ENCODE measurements at regions of chr15 and their contacts with region 1.

Region 1: DNA sequence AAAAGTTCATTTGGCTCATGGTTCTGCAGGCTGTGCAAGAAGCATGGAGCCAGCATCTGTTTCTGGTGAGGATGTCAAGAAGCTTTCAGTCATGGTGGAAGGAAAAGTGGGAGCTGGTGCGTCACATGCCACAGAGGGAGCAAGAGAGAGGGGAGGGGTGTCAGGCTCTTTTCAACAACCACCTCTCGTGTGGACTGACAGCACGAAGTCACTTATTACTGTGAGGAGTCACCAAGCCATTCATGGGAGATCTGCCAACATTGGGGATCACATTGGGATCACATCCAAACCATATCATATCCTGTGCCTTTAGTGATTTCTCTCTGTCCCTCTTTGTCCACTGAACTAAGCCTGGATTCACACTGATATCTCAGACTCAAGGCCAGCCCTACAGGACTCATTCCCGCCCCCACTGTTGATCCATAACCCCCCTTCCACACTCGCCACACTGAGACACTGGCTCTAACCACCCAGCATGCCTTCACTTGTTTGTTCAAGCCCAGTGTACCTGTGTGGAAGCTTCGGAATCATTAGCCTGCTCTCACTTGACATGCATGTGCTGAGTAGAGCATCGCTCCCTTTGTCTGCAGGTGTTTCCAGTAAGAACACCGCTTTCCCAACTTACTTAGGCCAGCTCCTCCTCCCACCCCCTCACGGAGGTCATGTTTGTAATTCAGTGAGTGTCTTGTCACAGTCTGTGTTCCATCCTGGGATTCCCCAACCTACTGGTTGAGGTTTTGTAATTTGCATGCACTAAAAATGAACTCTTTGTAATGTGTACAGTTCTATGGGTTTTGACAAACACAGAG is 132.2 kb downstream of the KLF13 start:
- DNase-seq: peak; percentile 88
- H3K4me3 ChIP-seq: peak overlapping the region; percentile 62
- H3K27ac ChIP-seq: peak overlapping the region; percentile 96
- H3K4me1 ChIP-seq: peaks cover 95% of the 10 kb centered on the region
- CTCF ChIP-seq: no peak

Region 2: DNA sequence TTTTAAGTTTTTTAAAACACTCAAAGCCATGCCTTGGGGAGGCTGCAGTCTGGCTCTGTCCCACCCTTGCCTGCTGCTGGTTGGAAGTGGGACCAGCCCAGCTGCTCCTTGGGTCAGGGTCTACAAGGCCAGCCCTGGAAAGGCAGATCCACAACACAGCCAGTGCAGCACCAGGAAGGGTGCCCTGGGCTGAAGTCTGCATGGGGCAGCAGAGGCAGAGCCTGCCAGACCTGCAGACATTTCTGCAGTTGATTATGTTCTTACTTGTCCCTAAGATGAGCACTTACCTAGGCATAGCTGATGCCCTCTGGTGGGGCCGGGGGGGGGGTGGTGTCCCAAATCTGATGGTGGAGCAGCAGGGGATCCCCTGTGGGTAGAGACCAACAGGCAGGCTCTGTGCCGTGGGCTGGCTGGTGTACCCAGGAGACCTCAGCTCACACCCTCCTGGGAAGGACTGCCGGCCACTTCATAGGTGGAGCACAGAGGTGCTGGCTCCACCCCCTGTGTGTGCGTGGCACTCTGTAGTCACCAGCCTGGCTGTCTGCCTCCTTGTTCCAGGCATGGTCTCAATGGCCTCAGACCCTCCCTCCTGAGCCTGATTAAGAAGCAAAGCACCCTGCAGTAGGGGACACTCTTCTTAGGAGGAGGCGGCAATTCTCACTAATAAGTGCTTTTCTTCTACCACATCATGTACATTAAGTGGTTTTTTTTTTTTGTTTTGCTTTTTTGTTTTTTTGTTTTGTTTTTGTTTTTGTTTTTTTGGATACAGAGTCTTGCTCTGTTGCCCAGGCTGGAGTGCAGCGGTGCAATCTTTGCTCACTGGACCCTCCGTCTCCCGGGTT is 229.6 kb before region 1 on chr15:
- CTCF ChIA-PET with region 1: no interaction called
- POLR2A ChIA-PET with region 1: interaction called, 22 read pairs
- intact Hi-C with region 1: loop called (anchors 2 kb)
- DNase-seq: peak; percentile 91
- H3K4me3 ChIP-seq: peak overlapping the region; percentile 77
- H3K27ac ChIP-seq: peak overlapping the region; percentile 99
- H3K4me1 ChIP-seq: peaks cover 94% of the 10 kb centered on the region
- CTCF ChIP-seq: no peak

Region 3: GRCh38 chr15:31440754-31441311 is 18.0 kb before region 1 on chr15:
- CTCF ChIA-PET with region 1: interaction called, 5 read pairs
- POLR2A ChIA-PET with region 1: interaction called, 14 read pairs
- intact Hi-C with region 1: loop called (anchors 2 kb)
- DNase-seq: no peak
- H3K4me3 ChIP-seq: peak overlapping the region; percentile 27
- H3K27ac ChIP-seq: no peak overlapping the region
- H3K4me1 ChIP-seq: peaks cover 97% of the 10 kb centered on the region
- CTCF ChIP-seq: no peak

Region 4: DNA sequence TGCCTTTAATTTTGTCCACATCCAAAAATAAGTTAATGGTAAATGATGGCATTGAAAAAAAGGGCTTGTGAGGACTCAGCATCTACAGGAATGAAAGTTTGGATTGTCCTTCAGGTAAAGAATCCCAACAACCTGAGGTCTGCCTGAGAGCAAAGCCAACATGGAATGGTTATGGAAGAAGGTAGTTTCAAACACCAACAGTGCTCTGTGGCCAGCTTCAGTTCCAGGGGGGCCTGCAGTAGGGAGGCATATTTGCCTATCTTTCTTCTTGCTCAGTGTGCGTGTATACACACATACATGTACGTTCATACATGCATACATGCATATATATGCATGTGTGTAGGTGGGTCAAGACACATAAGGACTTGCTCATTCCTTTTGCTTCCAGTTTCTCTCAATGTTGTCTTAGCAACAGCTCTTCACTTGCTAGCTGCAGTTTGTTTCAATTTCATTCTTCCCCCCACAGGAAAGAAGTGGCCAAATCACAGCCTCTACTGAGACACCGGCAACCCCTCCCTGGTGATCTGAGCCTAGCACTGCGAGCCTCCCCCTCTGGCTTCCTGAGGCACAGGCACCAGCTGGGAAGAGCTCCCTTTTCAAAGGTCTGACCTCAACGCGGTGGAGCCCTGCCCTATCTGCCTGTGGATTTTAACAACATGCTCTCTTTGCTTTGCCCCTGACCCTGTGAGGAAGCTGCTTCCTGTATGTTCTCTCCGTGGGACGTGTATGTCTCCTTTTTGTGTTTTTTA is 14.0 kb after region 1 on chr15:
- CTCF ChIA-PET with region 1: interaction called, 6 read pairs
- POLR2A ChIA-PET with region 1: interaction called, 22 read pairs
- intact Hi-C with region 1: no loop called
- DNase-seq: peak; percentile 39
- H3K4me3 ChIP-seq: no peak overlapping the region
- H3K27ac ChIP-seq: no peak overlapping the region
- H3K4me1 ChIP-seq: peaks cover 45% of the 10 kb centered on the region
- CTCF ChIP-seq: no peak

Region 5: DNA sequence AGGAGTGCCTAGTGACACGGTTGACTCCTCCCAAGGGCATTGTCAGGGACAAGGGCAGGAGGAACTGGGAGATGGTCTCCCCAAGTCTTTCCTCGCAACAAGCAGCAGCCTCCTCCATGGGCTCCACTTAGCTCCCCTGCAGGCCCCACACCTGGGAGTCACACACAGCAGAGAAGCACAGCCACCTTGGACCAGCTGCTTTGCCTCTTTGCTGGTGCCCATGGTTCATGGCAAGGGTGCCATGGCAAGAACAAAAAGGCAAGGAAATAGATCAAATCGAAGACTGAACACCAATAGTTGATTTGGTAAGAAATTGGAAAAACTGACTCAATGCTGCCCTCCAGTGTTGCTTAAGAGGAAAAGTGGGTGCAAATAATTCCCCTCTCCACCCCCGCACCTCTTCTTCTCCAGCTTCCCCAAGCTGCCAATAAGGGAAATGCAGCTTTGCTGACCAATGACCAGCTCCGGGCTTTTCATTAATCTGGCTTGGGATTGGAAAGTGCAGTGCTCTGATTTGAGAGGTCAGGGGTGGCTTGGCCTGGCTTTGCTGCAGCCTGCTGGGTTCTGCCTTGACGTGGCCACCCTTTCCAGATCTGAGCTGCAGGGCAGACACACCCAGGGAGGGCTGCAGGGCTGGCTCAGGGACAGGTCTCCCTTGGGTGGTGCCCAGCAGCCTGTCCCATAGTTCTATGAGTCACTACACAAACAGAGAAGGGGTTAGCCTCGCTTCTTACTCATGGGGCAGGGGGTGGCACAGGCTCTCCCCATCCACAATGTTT is 29.8 kb after region 1 on chr15:
- CTCF ChIA-PET with region 1: interaction called, 18 read pairs
- POLR2A ChIA-PET with region 1: interaction called, 5 read pairs
- intact Hi-C with region 1: loop called (anchors 1 kb)
- DNase-seq: peak; percentile 83
- H3K4me3 ChIP-seq: no peak overlapping the region
- H3K27ac ChIP-seq: no peak overlapping the region
- H3K4me1 ChIP-seq: peaks cover 38% of the 10 kb centered on the region
- CTCF ChIP-seq: peak; percentile 96